ENCODE measurements at regions of chrX and their contacts with region 1.

Region 1: GRCh38 chrX:136767104-136767941 is 13.4 kb downstream of the ARHGEF6 start:
- DNase-seq: peak; percentile 81
- H3K4me3 Mint-ChIP-seq: peak overlapping the region; percentile 83
- H3K27ac Mint-ChIP-seq: peak overlapping the region; percentile 95
- H3K4me1 Mint-ChIP-seq: peaks cover 50% of the 10 kb centered on the region
- H3K27me3 Mint-ChIP-seq: no peaks in the 10 kb centered on the region

Region 2: DNA sequence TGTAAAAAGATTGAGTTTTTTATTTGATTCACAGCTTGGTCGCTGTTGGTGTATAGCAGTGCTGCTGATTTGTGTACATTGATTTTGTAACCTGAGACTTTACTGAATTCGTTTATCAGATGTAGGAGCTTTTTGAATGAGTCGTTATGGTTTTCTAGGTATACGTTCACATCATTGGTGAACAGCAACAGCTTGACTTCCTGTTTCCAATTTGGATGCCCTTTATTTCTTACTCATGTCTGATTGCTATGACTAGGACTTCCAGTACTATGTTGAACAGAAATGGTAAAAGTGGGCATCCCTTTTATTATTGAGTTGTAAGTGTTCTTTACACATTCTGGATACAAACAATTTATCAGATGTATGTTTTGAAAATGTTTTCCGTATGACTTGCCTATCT is 390.6 kb before region 1 on chrX:
- intact Hi-C with region 1: no loop called
- DNase-seq: no peak
- H3K4me3 Mint-ChIP-seq: no peak overlapping the region
- H3K27ac Mint-ChIP-seq: no peak overlapping the region
- H3K4me1 Mint-ChIP-seq: no peaks in the 10 kb centered on the region
- H3K27me3 Mint-ChIP-seq: peaks cover 8% of the 10 kb centered on the region

Region 3: GRCh38 chrX:136731207-136731782 is 36.0 kb before region 1 on chrX:
- intact Hi-C with region 1: loop called (anchors 5 kb)
- DNase-seq: no peak
- H3K4me3 Mint-ChIP-seq: peak overlapping the region; percentile 70
- H3K27ac Mint-ChIP-seq: peak overlapping the region; percentile 55
- H3K4me1 Mint-ChIP-seq: peaks cover 43% of the 10 kb centered on the region
- H3K27me3 Mint-ChIP-seq: no peaks in the 10 kb centered on the region

Region 4: GRCh38 chrX:136780763-136781162 is 13.4 kb after region 1 on chrX and contains the start of gene ARHGEF6:
- intact Hi-C with region 1: loop called (anchors 1 kb)
- DNase-seq: peak; percentile 81
- H3K4me3 Mint-ChIP-seq: peak within 1 kb of the TSS; percentile 86
- H3K27ac Mint-ChIP-seq: peak within 1 kb of the TSS; percentile 94
- H3K4me1 Mint-ChIP-seq: peaks cover 53% of the 10 kb centered on the region
- H3K27me3 Mint-ChIP-seq: no peaks in the 10 kb centered on the region
- total RNA-seq, gene ARHGEF6: 37.4 and 38.0 TPM in 2 replicates

Region 5: DNA sequence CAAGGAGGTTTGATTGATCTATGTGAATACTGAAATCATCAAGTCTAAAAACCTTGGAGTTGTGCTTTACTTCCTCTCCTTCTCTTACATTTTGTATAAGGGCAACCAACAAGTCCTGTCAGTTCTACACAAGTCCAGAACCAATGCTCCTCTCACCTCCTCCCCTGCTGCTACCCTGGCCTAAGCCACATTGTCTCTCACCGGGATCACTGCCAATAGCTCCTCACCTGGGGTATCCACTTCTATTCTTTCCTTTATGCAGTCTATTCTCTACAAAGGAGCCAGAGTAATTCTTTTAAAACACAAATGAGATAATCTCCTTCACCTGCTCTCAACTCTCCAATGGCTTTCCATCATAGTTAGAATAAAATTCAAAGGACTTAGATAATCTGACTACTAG is 26.8 kb after region 1 on chrX:
- intact Hi-C with region 1: no loop called
- DNase-seq: no peak
- H3K4me3 Mint-ChIP-seq: no peak overlapping the region
- H3K27ac Mint-ChIP-seq: no peak overlapping the region
- H3K4me1 Mint-ChIP-seq: peaks cover 8% of the 10 kb centered on the region
- H3K27me3 Mint-ChIP-seq: no peaks in the 10 kb centered on the region

Region 6: DNA sequence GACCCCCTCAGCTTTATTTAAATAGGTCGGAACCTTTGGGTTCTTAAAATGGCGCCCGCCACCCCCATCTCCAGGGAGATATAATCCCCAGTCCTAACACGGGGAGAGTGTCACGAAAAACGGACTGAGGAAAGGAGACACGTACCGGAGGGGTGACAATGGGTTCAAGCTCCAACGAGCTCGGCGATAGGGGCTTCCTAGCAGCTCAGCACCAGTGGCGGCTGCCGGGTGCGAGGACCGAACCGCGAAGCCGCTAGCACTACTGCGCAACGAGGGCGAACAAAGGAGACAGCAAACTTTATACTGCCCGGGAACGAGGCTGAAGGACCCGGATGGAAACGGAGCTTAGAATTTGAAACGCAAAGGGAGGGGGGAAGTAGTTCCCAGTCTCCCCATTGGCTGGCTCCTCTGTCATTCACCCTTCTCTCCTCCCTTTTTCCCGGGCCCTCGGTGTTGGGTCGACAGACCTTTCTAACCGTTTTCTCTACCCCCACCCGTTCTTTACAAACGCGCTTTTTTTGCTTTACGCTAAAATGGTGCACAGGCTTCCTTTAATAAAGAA is 113.2 kb after region 1 on chrX and contains the start of gene RBMX:
- intact Hi-C with region 1: loop called (anchors 5 kb)
- DNase-seq: peak; percentile 96
- H3K4me3 Mint-ChIP-seq: peak within 1 kb of the TSS; percentile 97
- H3K27ac Mint-ChIP-seq: peak within 1 kb of the TSS; percentile 99
- H3K4me1 Mint-ChIP-seq: peaks cover 2% of the 10 kb centered on the region
- H3K27me3 Mint-ChIP-seq: no peaks in the 10 kb centered on the region
- total RNA-seq, gene RBMX: 324 and 334 TPM in 2 replicates

Region 7: GRCh38 chrX:136920001-136920400 is 152.7 kb after region 1 on chrX:
- intact Hi-C with region 1: loop called (anchors 10 kb)
- DNase-seq: no peak
- H3K4me3 Mint-ChIP-seq: no peak overlapping the region
- H3K27ac Mint-ChIP-seq: no peak overlapping the region
- H3K4me1 Mint-ChIP-seq: peaks cover 1% of the 10 kb centered on the region
- H3K27me3 Mint-ChIP-seq: no peaks in the 10 kb centered on the region